HCT116 (cell line): ENCODE measurements at regions of chr2 and their contacts with region 1.

Region 1: DNA sequence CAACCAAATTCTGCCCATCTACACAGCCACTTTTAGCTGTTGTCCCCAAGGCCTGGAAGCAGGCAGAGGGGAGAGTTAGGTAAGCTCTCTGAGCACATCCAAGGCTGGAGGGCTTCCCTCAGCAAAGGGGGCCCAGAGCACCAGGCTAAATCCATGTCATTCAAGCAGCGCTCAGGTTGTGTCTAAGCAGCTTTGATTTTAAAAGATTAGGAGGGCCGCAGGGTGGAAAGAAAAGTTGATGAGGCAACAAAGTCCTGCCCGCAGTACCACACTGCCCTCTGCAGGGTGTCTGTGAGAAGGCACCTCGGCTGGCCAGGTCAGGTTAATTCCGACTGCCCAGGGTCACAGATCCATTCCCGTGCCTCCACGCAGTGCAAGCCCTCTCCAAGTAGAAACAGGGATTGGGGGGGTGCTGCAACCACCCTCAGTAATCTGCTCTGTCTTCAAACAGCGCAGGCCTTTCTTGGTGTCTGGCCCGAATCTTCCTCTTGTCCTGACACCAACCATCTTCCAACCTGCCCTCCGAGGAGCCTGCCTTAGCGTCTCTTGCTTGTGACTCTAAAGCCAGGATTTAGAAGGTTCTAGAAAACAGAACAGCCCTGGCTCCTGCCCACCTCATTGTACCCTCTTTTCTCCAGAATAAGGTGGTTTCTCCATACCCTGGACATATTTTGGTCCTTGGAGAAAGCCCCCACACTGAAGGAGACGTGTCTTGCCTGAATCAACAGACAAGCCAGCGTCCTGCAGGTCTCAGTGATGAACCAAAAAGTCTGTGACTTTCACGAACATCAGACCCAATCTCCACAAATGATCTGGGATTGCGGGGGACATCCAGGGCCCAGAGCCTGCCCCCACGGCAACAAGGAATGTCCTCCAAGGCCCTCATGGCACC is 289.2 kb downstream of the TNS1 start:
- DNase-seq: peak; percentile 26
- ATAC-seq: peak; percentile 89
- H3K4me3 ChIP-seq: no peak overlapping the region
- H3K27ac ChIP-seq: no peak overlapping the region
- H3K4me1 ChIP-seq: no peaks in the 10 kb centered on the region
- H3K27me3 ChIP-seq: peaks cover 45% of the 10 kb centered on the region
- CTCF ChIP-seq: peak; percentile 83 to 96 (median 95)
- POLR2A ChIP-seq: no peak
- RAD21 ChIP-seq: peak; percentile 97

Region 2: DNA sequence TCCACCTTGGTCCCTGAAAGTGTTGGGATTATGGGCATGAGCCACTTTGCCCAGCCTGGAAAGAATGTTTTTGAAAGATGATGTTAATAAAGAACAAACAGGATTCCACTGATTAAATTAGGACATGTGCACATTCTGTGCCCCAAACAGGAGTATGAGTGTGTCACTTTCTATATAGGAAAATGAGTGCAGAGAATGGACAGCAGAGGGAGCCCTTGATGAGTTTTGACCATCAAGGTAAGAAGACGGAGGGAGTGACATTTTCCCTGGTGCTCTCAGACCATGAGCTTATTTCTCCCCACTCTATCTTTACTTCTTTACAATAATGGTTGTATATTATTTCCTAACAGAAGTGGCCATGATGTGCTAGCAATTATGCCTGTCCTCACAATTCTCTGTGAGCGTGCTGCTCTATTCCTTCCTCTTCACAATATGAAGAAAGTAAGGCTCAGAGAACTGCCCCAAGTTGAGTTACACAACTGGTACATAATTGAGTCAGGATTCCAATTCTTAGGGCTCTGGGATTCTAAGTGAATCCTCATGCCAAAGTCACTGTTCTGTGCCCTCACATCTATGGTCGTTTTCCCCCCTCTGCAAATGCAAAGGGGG is 1194.4 kb before region 1 on chr2:
- CTCF ChIA-PET with region 1: interaction called, 3 read pairs
- POLR2A ChIA-PET with region 1: no interaction called
- RAD21 ChIA-PET with region 1: no interaction called
- intact Hi-C with region 1: loop called (anchors 5 kb)
- DNase-seq: peak; percentile 67
- ATAC-seq: peak; percentile 88
- H3K4me3 ChIP-seq: no peak overlapping the region
- H3K27ac ChIP-seq: no peak overlapping the region
- H3K4me1 ChIP-seq: no peaks in the 10 kb centered on the region
- H3K27me3 ChIP-seq: no peaks in the 10 kb centered on the region
- CTCF ChIP-seq: peak; percentile 67 to 80 (median 76); a peak in 5 of 6 replicates
- POLR2A ChIP-seq: no peak
- RAD21 ChIP-seq: peak; percentile 80

Region 3: DNA sequence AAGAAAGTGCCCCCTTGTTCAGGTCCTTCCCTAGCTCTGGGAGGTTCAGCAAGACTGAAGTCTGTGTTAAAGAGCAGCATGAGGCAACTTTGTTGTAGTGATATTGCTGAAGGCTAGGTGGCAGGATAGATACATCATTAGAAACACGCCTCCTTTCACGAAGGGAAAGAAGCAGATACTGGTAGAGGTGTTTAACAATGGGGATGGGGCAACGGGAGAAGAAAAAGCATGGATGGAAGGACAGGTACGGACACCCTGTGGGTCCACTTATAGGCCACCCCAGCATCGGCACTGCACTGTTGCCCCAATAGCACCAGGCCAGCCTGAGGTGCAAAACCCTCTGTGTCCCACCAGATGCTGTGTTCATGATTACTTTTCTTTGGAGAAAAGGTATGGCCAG is 1014.7 kb before region 1 on chr2:
- CTCF ChIA-PET with region 1: interaction called, 9 read pairs
- POLR2A ChIA-PET with region 1: no interaction called
- RAD21 ChIA-PET with region 1: no interaction called
- intact Hi-C with region 1: loop called (anchors 5 kb)
- DNase-seq: peak; percentile 48
- ATAC-seq: peak; percentile 80
- H3K4me3 ChIP-seq: no peak overlapping the region
- H3K27ac ChIP-seq: no peak overlapping the region
- H3K4me1 ChIP-seq: peaks cover 20 to 30% of the 10 kb centered on the region in 2 experiments
- H3K27me3 ChIP-seq: peaks cover 22% of the 10 kb centered on the region; the same call in 1 of the 2 replicates
- CTCF ChIP-seq: peak; percentile 57 to 74 (median 67); a peak in 5 of 6 replicates
- POLR2A ChIP-seq: no peak
- RAD21 ChIP-seq: peak; percentile 88

Region 4: DNA sequence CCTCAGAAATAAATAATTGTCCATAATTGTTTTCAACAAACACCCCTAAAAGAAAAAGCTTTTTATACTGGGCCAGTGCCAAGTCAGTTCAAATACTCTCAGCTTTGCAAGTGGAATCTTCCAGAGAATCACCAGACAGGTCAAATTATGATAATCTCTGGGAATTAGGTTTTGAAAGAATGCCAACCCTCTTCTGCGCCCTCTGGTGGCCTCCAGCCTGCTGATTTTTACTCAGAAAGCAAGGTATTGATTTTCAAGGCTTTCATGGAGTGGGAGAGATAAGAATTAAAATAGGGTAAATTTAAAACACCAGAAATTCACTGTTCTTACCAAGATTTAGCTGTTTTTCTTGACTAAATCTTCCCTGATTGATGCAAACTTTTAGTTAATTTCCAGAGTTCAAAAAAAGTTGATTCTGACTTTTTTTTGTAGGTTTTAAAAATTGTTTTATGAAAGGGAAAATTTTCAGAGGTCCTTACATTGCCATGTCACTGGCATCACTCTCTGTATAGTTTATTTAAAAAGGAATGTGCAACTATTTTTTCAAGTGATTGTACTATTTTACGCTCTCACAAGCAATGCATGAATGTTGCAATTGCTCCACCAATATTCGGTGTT is 570.9 kb before region 1 on chr2:
- CTCF ChIA-PET with region 1: no interaction called
- POLR2A ChIA-PET with region 1: no interaction called
- RAD21 ChIA-PET with region 1: no interaction called
- intact Hi-C with region 1: loop called (anchors 5 kb)
- DNase-seq: peak; percentile 29
- ATAC-seq: peak; percentile 64
- H3K4me3 ChIP-seq: no peak overlapping the region
- H3K27ac ChIP-seq: no peak overlapping the region
- H3K4me1 ChIP-seq: no peaks in the 10 kb centered on the region
- H3K27me3 ChIP-seq: peaks cover 22% of the 10 kb centered on the region
- CTCF ChIP-seq: peak; percentile 75 to 88 (median 83); a peak in 5 of 6 replicates
- POLR2A ChIP-seq: no peak
- RAD21 ChIP-seq: peak; percentile 74

Region 5: GRCh38 chr2:217510771-217511291 is 202.8 kb before region 1 on chr2:
- CTCF ChIA-PET with region 1: interaction called, 11 read pairs
- POLR2A ChIA-PET with region 1: no interaction called
- RAD21 ChIA-PET with region 1: interaction called, 3 read pairs
- intact Hi-C with region 1: loop called (anchors 2 kb)
- DNase-seq: peak; percentile 70
- ATAC-seq: peak; percentile 98
- H3K4me3 ChIP-seq: no peak overlapping the region
- H3K27ac ChIP-seq: no peak overlapping the region
- H3K4me1 ChIP-seq: peaks cover 0 to 3% of the 10 kb centered on the region in 2 experiments; a peak in 2 of 4 replicates
- H3K27me3 ChIP-seq: peaks cover 13% of the 10 kb centered on the region; the same call in 1 of the 2 replicates
- CTCF ChIP-seq: peak; percentile 69 to 85 (median 75)
- POLR2A ChIP-seq: no peak
- RAD21 ChIP-seq: peak; percentile 94

Region 6: DNA sequence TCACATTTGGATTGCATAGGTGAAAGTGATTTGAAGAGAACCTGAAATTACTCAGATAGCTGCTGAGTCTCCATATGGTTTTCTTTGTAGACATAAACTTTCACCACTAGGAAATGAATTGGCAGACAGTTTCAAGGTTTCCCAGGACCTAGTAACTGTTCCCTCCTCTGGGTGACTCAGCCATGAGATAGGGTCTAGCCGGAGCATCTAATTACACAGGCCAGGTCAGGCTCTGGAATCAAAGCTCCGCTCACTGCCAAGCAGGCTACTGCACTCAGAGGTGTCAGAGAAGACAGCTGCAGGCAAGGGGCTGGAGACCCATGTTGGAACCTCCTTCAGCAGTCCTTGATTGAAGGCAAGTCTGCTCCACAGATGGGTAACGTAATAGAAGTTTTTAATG is 140.1 kb before region 1 on chr2:
- CTCF ChIA-PET with region 1: no interaction called
- POLR2A ChIA-PET with region 1: no interaction called
- RAD21 ChIA-PET with region 1: no interaction called
- intact Hi-C with region 1: no loop called
- DNase-seq: no peak
- ATAC-seq: peak; percentile 25; the same call in 1 of the 2 replicates
- H3K4me3 ChIP-seq: no peak overlapping the region
- H3K27ac ChIP-seq: no peak overlapping the region
- H3K4me1 ChIP-seq: no peaks in the 10 kb centered on the region
- H3K27me3 ChIP-seq: peaks cover 26% of the 10 kb centered on the region
- CTCF ChIP-seq: no peak
- POLR2A ChIP-seq: no peak
- RAD21 ChIP-seq: no peak